ENCODE measurements at regions of chr14 and their contacts with region 1.

Region 1: GRCh38 chr14:76050797-76051392 is 65.3 kb downstream of the IFT43 start:
- DNase-seq: peak; percentile 9
- H3K4me3 ChIP-seq: no peak overlapping the region
- H3K27me3 ChIP-seq: no peaks in the 10 kb centered on the region
- CTCF ChIP-seq: peak; percentile 67

Region 2: DNA sequence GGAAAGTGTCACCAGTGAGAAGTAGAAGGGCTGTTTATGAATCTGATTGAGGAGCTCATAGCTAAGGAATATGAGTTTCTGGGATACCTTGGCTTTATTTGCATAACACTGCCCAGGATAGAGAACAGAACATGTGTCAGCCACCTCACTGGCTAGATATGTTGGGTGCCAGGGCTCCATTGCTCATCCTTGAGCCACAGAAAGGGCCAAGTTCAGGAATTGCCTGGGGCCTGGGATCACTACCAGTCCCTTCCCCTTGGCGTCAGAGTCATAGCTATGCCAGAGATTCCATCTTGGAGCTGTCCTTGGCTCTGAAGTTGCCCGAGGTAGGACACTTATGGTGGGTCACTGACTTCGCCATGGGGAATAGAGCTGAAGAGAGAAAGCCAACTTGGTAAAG is 16.3 kb before region 1 on chr14:
- CTCF ChIA-PET with region 1: interaction called, 11 read pairs
- POLR2A ChIA-PET with region 1: no interaction called
- DNase-seq: no peak
- H3K4me3 ChIP-seq: no peak overlapping the region
- H3K27me3 ChIP-seq: no peaks in the 10 kb centered on the region
- CTCF ChIP-seq: no peak

Region 3: GRCh38 chr14:76040704-76041103 is 10.2 kb before region 1 on chr14:
- CTCF ChIA-PET with region 1: interaction called, 11 read pairs
- POLR2A ChIA-PET with region 1: no interaction called
- DNase-seq: no peak
- H3K4me3 ChIP-seq: no peak overlapping the region
- H3K27me3 ChIP-seq: no peaks in the 10 kb centered on the region
- CTCF ChIP-seq: no peak

Region 4: DNA sequence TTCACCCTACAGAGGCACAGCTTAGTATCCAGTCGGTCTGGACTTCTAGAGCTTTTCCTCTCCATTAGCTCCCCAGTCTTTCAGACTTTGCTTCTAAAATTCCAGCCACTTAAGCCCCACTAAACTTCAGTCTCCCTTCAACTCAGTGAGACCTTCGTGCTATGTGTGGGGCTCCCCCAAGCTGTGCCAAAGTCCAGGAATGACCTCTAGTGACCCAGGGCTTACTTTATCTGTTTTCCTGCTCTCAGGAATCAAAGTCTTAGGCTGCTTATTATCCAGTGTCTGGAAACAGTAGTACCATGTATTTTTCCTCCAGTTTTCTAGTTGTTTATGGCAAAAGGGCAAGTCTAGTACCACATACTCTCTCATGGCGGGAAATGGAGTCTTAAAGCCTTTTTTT is 12.4 kb after region 1 on chr14:
- CTCF ChIA-PET with region 1: interaction called, 16 read pairs
- POLR2A ChIA-PET with region 1: no interaction called
- DNase-seq: no peak
- H3K4me3 ChIP-seq: no peak overlapping the region
- H3K27me3 ChIP-seq: no peaks in the 10 kb centered on the region
- CTCF ChIP-seq: no peak

Region 5: DNA sequence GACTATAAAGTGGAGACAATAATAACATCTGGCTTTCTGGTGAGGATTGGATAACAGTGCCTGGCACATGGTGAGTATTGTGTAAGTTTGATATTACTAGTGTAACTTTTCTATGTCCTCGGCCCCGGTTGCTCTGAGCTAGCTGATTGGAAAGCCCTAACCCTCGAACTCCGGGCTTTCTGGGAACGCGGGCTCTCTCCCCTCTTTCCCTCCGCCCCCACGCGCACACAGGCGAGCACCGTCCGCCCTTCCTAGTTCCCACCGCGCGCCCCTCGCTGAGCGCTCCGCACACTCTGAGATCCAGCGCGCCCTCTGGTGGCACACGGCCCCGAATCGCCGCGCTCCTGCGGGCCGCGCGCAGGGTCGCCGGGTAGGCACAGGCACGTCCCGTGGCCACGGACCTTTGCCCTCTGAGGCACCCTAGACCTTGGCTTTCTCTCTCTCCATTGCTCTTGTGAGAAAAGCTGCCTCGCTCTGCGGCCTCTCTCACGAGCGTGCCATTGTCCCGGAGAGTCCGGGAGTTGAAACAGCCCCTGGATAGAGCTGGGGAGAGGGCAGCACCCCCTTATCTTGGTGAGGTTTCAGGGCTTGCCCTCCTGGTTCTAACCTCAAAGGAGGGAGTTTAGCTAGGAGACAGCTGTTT is 301.9 kb after region 1 on chr14:
- CTCF ChIA-PET with region 1: interaction called, 122 read pairs
- POLR2A ChIA-PET with region 1: no interaction called
- DNase-seq: no peak
- H3K4me3 ChIP-seq: peak overlapping the region; percentile 23
- H3K27me3 ChIP-seq: peaks cover 9% of the 10 kb centered on the region
- CTCF ChIP-seq: peak; percentile 81

Region 6: GRCh38 chr14:76386915-76387782 is 336.3 kb after region 1 on chr14:
- CTCF ChIA-PET with region 1: interaction called, 46 read pairs
- POLR2A ChIA-PET with region 1: no interaction called
- DNase-seq: no peak
- H3K4me3 ChIP-seq: no peak overlapping the region
- H3K27me3 ChIP-seq: peaks cover 11% of the 10 kb centered on the region
- CTCF ChIP-seq: peak; percentile 99

Measured in BJ (cell line).